Pancreas (tissue), 10 donors: ENCODE measurements at regions of chr7 and their contacts with region 1.

Region 1: DNA sequence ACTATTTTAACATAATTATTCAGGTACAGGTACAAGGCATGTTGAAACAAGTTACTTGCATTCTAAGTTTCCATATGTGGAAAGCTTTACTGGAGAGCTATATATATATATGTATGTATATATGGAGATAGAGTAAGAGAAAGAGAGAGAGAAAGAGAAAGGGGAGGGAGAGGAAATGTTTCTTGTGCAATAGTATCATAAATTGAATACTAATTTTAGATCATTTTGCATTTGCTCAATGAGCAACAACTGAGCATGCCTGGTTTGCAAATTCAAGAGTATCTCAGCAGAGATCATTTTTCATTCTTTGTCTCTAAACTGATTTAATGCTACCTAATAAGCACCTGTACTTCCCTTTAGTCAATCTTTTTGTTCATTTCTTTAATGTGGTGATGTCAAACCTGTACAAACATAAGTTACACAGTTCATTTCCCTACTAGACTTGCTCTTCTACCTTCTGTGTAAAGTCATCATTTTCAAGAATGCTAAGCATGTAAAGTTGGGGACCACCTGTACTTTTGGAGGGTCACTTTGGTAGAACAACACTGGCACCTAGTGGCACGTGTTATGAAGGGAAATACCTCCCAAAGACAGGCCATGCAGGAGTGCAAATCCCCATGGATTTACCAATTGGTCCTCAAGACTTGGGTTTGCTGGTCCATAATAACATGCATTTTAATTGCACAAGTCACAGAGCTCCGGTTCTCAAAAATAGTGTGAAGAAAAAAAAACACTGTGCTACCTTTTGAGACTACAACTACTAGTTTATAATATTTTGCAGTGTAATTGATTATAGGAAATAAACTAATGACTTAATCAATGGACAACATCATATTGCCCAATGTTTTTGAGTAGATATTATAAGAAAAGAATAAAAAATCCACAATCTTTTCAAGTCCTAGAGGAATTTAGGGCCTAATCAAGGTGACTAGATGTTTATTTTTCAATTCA is 431.2 kb upstream of the IGFBP3 start:
- DNase-seq: peak in 1 of 6 donors; percentile 41
- ATAC-seq: peak in 3 of 4 donors; percentile 65 to 82 (median 72)
- H3K4me3 ChIP-seq: no peak overlapping the region
- H3K27ac ChIP-seq: no peak overlapping the region
- H3K4me1 ChIP-seq: no peaks in the 10 kb centered on the region
- H3K27me3 ChIP-seq: no peaks in the 10 kb centered on the region
- CTCF ChIP-seq: peak in 3 of 4 donors; percentile 18 to 28 (median 26)

Region 2: DNA sequence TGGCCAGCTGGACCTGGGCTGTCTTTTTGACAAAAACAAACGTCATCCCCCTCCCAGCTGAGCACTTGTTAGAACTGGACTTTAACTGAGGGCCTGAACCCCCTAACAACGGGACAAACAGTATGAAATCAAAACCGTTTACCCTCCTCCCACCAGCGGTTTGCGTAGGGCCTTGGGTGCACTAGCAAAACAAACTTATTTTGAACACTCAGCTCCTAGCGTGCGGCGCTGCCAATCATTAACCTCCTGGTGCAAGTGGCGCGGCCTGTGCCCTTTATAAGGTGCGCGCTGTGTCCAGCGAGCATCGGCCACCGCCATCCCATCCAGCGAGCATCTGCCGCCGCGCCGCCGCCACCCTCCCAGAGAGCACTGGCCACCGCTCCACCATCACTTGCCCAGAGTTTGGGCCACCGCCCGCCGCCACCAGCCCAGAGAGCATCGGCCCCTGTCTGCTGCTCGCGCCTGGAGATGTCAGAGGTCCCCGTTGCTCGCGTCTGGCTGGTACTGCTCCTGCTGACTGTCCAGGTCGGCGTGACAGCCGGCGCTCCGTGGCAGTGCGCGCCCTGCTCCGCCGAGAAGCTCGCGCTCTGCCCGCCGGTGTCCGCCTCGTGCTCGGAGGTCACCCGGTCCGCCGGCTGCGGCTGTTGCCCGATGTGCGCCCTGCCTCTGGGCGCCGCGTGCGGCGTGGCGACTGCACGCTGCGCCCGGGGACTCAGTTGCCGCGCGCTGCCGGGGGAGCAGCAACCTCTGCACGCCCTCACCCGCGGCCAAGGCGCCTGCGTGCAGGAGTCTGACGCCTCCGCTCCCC is 463.9 kb before region 1 on chr7 and contains the start of gene IGFBP1:
- intact Hi-C with region 1: no loop called
- DNase-seq: peak in 1 of 6 donors; percentile 72
- ATAC-seq: peak; percentile 42 to 70 (median 68)
- H3K4me3 ChIP-seq: peak within 1 kb of the TSS in 2 of 4 donors; percentile 8 to 34
- H3K27ac ChIP-seq: no peak within 1 kb of the TSS
- H3K4me1 ChIP-seq: no peaks in the 10 kb centered on the region
- H3K27me3 ChIP-seq: peaks cover 0 to 4% (median 2%) of the 10 kb centered on the region in 4 donors
- CTCF ChIP-seq: no peak
- total RNA-seq, gene IGFBP1: 0.19 TPM in 1 of 6 donors, not detected in the others

Region 3: GRCh38 chr7:45923290-45923689 is 429.0 kb before region 1 on chr7:
- intact Hi-C with region 1: loop called (anchors 5 to 10 kb)
- DNase-seq: peak; percentile 54 to 91 (median 72)
- ATAC-seq: peak; percentile 63 to 88 (median 70)
- H3K4me3 ChIP-seq: no peak overlapping the region
- H3K27ac ChIP-seq: no peak overlapping the region
- H3K4me1 ChIP-seq: peaks cover 0 to 36% (median 11%) of the 10 kb centered on the region in 3 donors
- H3K27me3 ChIP-seq: peaks cover 0 to 13% (median 2%) of the 10 kb centered on the region in 4 donors
- CTCF ChIP-seq: peak; percentile 61 to 86 (median 80)

Region 4: GRCh38 chr7:46414946-46415345 is 62.7 kb after region 1 on chr7:
- intact Hi-C with region 1: no loop called
- DNase-seq: no peak
- ATAC-seq: no peak
- H3K4me3 ChIP-seq: no peak overlapping the region
- H3K27ac ChIP-seq: no peak overlapping the region
- H3K4me1 ChIP-seq: no peaks in the 10 kb centered on the region
- H3K27me3 ChIP-seq: no peaks in the 10 kb centered on the region
- CTCF ChIP-seq: no peak